ENCODE measurements at regions of chr2 and their contacts with region 1.

Region 1: GRCh38 chr2:227471924-227472264 is at the start of gene AGFG1:
- DNase-seq: peak; percentile 64 to 72
- ATAC-seq: peak; percentile 88 to 93
- H3K4me3 ChIP-seq: peak within 1 kb of the TSS; percentile 75 to 88 (median 84)
- H3K27ac ChIP-seq: peak within 1 kb of the TSS; percentile 77 to 85 (median 83)
- H3K4me1 ChIP-seq: peaks cover 15 to 28% of the 10 kb centered on the region in 2 donors
- H3K27me3 ChIP-seq: no peaks in the 10 kb centered on the region
- CTCF ChIP-seq: peak; percentile 94 to 99 (median 97)
- POLR2A ChIP-seq: peak; percentile 49 to 74
- total RNA-seq, gene AGFG1: 55.1 to 75.6 (median 61.5) TPM

Region 2: DNA sequence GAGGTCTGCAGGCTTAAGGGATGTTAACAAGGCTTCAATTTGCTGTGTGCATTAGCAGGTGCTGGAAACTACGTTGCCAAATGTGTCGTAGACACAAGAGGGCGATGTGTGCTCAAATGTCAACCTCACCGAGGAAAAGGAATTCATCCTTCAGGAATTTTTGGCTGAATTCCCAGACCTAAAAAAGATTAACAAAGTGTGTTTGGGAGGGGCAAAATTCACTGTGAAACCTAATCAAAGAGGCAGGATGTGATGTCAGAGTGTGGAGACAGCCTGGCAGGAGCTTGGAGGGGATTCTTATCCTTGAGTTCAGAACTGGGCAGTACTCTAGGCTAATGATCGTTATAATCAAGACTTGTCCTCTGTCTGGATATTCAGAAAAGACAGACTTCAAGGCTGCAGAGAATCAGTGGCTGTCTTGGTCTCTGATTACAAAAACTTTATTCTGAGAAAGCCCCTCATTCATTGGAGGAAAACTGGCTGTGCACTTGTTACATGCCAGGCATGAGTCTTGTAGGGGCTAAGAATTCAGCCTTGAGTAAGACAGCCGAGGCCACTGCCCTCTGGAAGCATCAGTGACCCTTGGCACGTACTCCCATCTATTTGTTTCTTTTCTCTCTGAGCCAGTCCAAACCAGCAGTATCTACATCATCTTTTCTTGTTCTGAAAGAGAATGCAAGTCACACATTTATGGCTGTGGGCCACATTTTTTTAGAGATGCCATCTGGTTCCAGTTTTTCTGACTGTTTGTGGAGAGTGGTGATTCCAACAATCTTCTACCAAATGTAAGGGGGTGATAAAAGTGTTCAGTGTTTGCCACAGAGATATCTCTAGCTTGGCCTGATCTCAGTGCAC is 65.5 kb before region 1 on chr2:
- in situ Hi-C with region 1: no loop called
- intact Hi-C with region 1: loop called (anchors 2 kb)
- DNase-seq: peak; percentile 10 to 30
- ATAC-seq: peak; percentile 63 to 67
- H3K4me3 ChIP-seq: no peak overlapping the region
- H3K27ac ChIP-seq: peak overlapping the region; percentile 6 to 44 (median 36)
- H3K4me1 ChIP-seq: peaks cover 7 to 13% of the 10 kb centered on the region in 2 donors
- H3K27me3 ChIP-seq: no peaks in the 10 kb centered on the region
- CTCF ChIP-seq: peak in 4 of 5 experiments; percentile 13 to 59 (median 34)
- POLR2A ChIP-seq: no peak

Region 3: DNA sequence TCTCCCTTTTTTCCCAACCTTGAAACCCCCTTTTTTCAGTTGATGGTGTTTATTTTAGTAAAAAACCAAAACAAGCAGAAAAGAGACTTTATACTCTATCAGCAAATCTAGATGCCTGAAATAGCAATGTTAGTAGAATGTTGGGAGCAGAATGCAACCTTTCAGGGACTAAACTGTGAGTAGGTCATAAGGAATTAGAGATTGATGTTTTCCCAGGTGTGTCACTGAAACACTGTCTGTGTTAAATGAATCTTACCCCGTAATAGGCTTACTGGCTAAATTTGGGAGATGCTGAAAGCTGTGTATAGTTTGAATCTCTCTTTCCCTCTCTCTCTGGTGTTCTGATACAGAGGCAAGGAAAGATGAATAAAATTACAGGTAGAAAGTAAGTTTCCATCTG is 43.8 kb after region 1 on chr2:
- in situ Hi-C with region 1: no loop called
- intact Hi-C with region 1: loop called (anchors 5 kb)
- DNase-seq: no peak
- ATAC-seq: no peak
- H3K4me3 ChIP-seq: no peak overlapping the region
- H3K27ac ChIP-seq: no peak overlapping the region
- H3K4me1 ChIP-seq: peaks cover 71 to 77% of the 10 kb centered on the region in 2 donors
- H3K27me3 ChIP-seq: no peaks in the 10 kb centered on the region
- CTCF ChIP-seq: no peak
- POLR2A ChIP-seq: no peak

Region 4: GRCh38 chr2:227655454-227655853 is 183.6 kb after region 1 on chr2:
- in situ Hi-C with region 1: no loop called
- intact Hi-C with region 1: loop called (anchors 5 kb)
- DNase-seq: peak; percentile 11 to 24
- ATAC-seq: peak; percentile 83 to 85
- H3K4me3 ChIP-seq: no peak overlapping the region
- H3K27ac ChIP-seq: no peak overlapping the region
- H3K4me1 ChIP-seq: no peaks in the 10 kb centered on the region
- H3K27me3 ChIP-seq: no peaks in the 10 kb centered on the region
- CTCF ChIP-seq: no peak
- POLR2A ChIP-seq: no peak

Measured in gastrocnemius medialis (tissue), 4 donors.